ENCODE measurements at regions of chr2 and their contacts with region 1.

Region 1: GRCh38 chr2:29923110-29923721 is 1.8 kb upstream of the ALK start:
- DNase-seq: peak; percentile 69
- ATAC-seq: no peak
- H3K4me3 Mint-ChIP-seq: no peak overlapping the region
- H3K27ac Mint-ChIP-seq: no peak overlapping the region
- H3K4me1 Mint-ChIP-seq: peaks cover 13% of the 10 kb centered on the region
- H3K27me3 Mint-ChIP-seq: peaks cover 41% of the 10 kb centered on the region
- CTCF ChIP-seq: peak; percentile 91

Region 2: GRCh38 chr2:29871541-29871940 is 51.7 kb before region 1 on chr2:
- CTCF ChIA-PET with region 1: no interaction called
- POLR2A ChIA-PET with region 1: no interaction called
- DNase-seq: no peak
- ATAC-seq: no peak
- H3K4me3 Mint-ChIP-seq: no peak overlapping the region
- H3K27ac Mint-ChIP-seq: no peak overlapping the region
- H3K4me1 Mint-ChIP-seq: no peaks in the 10 kb centered on the region
- H3K27me3 Mint-ChIP-seq: no peaks in the 10 kb centered on the region
- CTCF ChIP-seq: no peak

Region 3: GRCh38 chr2:30026087-30027055 is 103.2 kb after region 1 on chr2:
- CTCF ChIA-PET with region 1: interaction called, 71 read pairs
- POLR2A ChIA-PET with region 1: no interaction called
- DNase-seq: peak; percentile 73
- ATAC-seq: peak; percentile 87
- H3K4me3 Mint-ChIP-seq: no peak overlapping the region
- H3K27ac Mint-ChIP-seq: no peak overlapping the region
- H3K4me1 Mint-ChIP-seq: peaks cover 24% of the 10 kb centered on the region
- H3K27me3 Mint-ChIP-seq: no peaks in the 10 kb centered on the region
- CTCF ChIP-seq: peak; percentile 60

Region 4: GRCh38 chr2:30072250-30072842 is 149.1 kb after region 1 on chr2:
- CTCF ChIA-PET with region 1: interaction called, 42 read pairs
- POLR2A ChIA-PET with region 1: no interaction called
- DNase-seq: peak; percentile 81
- ATAC-seq: peak; percentile 98
- H3K4me3 Mint-ChIP-seq: no peak overlapping the region
- H3K27ac Mint-ChIP-seq: no peak overlapping the region
- H3K4me1 Mint-ChIP-seq: peaks cover 14% of the 10 kb centered on the region
- H3K27me3 Mint-ChIP-seq: no peaks in the 10 kb centered on the region
- CTCF ChIP-seq: peak; percentile 75